Right ventricle myocardium inferior (tissue), 1 donor: ENCODE measurements at regions of chr20 and their contacts with region 1.

Region 1: DNA sequence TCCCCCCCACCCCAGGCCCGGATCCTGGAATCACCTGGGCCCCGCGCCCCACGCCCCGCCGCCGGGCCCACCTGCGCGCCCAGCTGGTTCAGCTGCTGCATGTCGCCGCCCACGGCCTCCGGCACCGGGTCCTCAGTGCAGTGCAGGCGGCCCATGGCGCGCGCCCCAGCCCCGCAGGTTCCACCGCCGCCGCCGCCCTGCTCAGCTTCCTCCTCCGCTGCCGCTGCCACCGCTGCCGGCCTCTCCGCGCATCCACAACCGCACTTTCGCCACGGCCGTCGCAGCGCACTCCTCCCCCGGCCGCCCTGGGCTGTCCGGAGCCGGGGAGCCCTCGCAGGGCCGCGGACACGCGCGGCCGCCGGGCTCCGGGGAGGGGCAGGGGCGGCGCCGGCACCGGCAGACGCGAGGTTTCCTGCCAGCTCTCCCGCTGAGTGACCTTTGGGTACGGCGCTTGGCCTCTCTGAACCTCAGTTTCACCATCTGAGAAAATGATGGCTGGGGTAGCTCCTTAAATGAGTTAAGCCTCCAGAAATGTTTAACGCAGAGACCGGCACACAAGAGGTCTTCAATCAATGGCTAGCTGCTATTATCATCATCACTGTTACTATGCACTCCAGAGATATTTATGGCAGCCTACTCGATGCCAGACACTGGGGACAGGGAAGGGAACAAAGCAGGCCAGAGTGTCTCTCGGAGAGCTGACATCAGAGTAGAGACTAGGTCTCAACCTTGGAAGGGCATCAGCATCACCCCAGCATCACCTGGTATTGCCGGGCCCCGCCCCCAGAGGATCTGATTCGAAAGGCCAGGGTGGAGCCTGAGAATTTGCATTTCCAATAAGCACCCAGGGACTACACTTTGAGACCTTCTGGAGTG is at the start of gene COMMD7:
- DNase-seq: peak; percentile 85
- ATAC-seq: peak; percentile 89
- total RNA-seq, gene COMMD7: 48.6 TPM

Region 2: DNA sequence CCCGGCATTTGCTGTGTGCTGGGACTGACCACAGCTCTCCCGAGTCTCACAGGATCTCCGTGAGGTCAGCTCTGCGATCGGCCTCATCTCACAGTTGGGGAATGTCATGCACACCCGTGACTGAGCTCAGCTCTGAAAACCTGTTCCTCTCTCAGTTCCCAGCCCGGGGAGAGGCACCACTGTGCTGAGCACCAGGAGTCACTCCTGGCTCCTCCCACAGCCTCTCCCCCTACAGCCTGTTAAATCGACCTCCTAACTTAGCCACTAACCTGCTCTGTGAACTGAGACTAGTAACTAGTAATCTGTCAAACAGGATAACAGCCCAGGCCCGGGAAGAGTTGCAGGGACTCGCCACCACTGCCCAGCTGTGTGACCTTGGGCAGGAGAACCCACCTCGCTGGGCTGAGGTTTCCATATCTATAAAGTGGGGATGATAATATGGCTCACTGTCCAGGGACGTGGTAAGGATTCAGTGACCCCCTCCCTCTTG is 138.3 kb before region 1 on chr20:
- intact Hi-C with region 1: no loop called
- DNase-seq: no peak
- ATAC-seq: no peak

Region 3: DNA sequence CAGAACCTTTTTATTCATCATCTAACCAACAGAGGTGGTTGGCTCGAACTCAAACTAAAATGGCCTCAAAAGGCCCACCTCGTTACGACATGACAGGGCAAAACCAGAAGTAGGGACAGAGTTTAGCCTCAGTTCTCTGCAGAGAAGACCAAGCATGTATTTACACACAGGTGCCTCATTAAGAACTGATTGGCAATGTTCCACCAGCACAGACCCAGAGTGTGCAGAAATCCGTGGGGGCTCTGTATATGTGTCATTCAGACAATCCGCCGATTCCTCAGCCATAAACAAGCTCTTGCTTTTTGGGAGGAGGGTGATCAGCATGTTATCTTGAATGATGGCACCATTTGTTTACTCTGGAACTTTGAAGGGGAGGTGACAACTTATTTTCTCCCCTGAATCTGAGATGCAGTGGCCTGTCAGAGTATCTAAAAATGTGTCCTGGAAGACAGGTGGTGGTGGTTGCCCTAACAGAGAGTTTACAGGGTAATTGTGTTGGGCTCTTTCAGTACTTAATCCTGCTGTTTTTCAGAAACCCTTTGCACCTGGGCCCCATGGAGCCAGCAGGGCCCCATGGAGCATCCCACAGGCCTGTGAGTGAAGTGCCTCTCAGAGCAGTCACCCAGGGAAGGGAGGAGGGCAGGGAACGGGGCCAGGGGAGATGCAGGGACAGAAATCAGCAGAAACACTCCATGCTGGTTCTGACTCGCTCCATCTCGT is 40.6 kb before region 1 on chr20:
- intact Hi-C with region 1: loop called (anchors 5 kb)
- DNase-seq: no peak
- ATAC-seq: no peak

Region 4: DNA sequence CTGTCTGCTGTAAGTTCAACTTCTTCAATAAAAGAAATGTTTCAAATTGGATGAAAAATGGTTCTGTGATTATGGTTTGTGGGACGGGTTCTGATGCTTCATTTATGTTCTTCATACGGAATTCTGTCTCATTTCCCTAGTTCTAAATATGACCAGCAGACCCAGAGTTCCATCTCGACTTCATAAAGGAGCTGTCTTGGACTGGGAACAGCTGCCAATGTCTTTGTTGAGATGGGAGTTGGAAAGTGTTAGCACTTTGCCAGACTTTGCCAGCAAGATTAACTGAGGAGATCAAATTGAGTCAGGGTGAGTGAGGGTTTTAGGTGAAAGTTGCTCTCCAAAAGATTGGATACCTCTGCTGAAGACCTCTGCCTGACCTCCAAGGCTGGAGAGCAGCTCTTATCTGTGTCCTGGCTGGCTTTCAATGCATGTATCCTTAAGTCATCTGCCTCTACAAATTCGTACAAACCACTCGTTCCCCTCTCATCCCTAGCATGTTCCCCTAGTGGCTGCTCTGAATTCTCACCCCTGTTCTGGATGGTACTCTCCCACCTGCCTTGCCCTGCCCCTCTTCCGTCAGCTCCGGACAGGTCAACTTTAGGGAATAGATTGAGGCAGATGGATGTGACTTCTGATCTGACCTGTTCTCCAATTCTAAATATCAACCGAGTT is 115.4 kb after region 1 on chr20 and contains the start of gene EFCAB8:
- intact Hi-C with region 1: no loop called
- DNase-seq: no peak
- ATAC-seq: peak; percentile 26
- total RNA-seq, gene EFCAB8: 0.43 TPM